PC-9 (cell line): ENCODE measurements at regions of chr1 and their contacts with region 1.

Region 1: DNA sequence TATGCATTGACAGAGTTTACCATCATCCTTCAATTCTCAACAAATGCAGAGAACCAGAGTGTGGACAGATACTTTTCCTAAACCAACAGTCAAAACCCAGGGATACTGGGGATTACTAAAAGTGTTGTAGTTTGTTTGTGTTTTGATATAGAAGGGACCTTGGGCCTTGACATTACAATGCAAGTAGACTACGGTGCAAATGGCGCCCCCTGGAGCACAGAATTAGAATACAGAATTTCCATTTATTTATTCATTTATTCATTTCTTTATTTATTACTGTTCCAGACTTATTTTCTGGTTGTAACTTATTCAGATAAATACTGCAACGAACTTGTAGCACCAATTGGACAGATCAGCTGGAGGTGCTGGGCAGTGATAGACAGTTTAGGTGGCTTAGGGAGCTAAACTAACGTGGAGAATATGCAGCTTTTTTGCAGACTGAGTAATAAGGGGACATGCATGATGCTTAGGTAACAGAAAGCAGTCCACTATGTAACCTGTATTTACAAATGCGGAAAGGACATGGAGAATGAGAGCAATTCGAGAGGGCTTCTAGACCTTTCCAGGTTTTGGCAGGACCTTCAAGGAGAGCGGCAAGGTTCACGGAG is 42.6 kb downstream of the KIRREL1 start:
- DNase-seq: peak in 1 of 2 experiments; percentile 33
- H3K4me3 ChIP-seq: no peak overlapping the region
- H3K27ac ChIP-seq: no peak overlapping the region
- H3K4me1 ChIP-seq: peaks cover 25% of the 10 kb centered on the region
- H3K27me3 ChIP-seq: no peaks in the 10 kb centered on the region
- CTCF ChIP-seq: peak; percentile 93

Region 2: GRCh38 chr1:158087320-158087927 is 51.3 kb after region 1 on chr1:
- CTCF ChIA-PET with region 1: no interaction called
- POLR2A ChIA-PET with region 1: no interaction called
- intact Hi-C with region 1: loop called (anchors 1 kb)
- DNase-seq: peak; percentile 51 to 56
- H3K4me3 ChIP-seq: no peak overlapping the region
- H3K27ac ChIP-seq: no peak overlapping the region
- H3K4me1 ChIP-seq: no peaks in the 10 kb centered on the region
- H3K27me3 ChIP-seq: no peaks in the 10 kb centered on the region
- CTCF ChIP-seq: peak; percentile 96